ENCODE measurements at regions of chr3 and their contacts with region 1.

Region 1: GRCh38 chr3:194134757-194135528 is 1.0 kb upstream of the HES1 start:
- DNase-seq: peak; percentile 75 to 94 (median 80)
- ATAC-seq: peak; percentile 61
- H3K4me3 ChIP-seq: peak overlapping the region; percentile 56
- H3K27ac ChIP-seq: peak overlapping the region; percentile 85
- H3K4me1 ChIP-seq: peaks cover 26 to 49% of the 10 kb centered on the region in 2 experiments
- H3K27me3 ChIP-seq: no peaks in the 10 kb centered on the region
- CTCF ChIP-seq: no peak
- EP300 ChIP-seq: peak; percentile 67
- POLR2A ChIP-seq: peak; percentile 69
- RAD21 ChIP-seq: peak in 1 of 2 experiments; percentile 21; a peak in 2 of 4 replicates

Region 2: DNA sequence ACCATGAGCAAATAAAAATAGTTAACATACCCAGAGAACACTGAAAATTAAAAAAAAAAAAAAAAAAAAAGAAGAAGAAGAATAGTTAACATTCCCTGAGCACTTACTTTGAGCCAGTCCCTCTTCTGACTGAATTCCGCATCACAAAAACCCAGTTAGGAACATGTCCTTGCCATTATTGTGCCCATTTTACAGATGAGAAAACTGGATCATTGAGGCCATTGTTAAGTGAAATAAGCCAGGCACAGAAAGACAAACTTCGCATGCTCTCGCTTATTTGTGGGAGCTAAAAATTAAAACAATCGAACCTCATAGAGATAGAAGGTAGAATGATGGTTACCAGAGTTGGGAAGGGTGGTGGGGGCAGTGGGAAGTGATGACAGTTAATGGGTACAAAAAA is 1527.1 kb before region 1 on chr3:
- CTCF ChIA-PET with region 1: no interaction called
- POLR2A ChIA-PET with region 1: no interaction called
- in situ Hi-C with region 1: no loop called
- intact Hi-C with region 1: no loop called
- DNase-seq: no peak
- ATAC-seq: no peak
- H3K4me3 ChIP-seq: no peak overlapping the region
- H3K27ac ChIP-seq: no peak overlapping the region
- H3K4me1 ChIP-seq: no peaks in the 10 kb centered on the region
- H3K27me3 ChIP-seq: no peaks in the 10 kb centered on the region
- CTCF ChIP-seq: no peak
- EP300 ChIP-seq: no peak
- POLR2A ChIP-seq: no peak
- RAD21 ChIP-seq: no peak

Region 3: GRCh38 chr3:193780810-193781472 is 354.0 kb before region 1 on chr3:
- CTCF ChIA-PET with region 1: interaction called, 5 read pairs
- POLR2A ChIA-PET with region 1: interaction called, 17 read pairs
- in situ Hi-C with region 1: loop called (anchors 5 kb)
- intact Hi-C with region 1: loop called (anchors 2 kb)
- DNase-seq: peak; percentile 77 to 85 (median 78)
- ATAC-seq: peak; percentile 93
- H3K4me3 ChIP-seq: no peak overlapping the region
- H3K27ac ChIP-seq: no peak overlapping the region
- H3K4me1 ChIP-seq: peaks cover 10 to 22% of the 10 kb centered on the region in 2 experiments; a peak in 4 of 5 replicates
- H3K27me3 ChIP-seq: no peaks in the 10 kb centered on the region
- CTCF ChIP-seq: peak; percentile 86
- EP300 ChIP-seq: no peak
- POLR2A ChIP-seq: no peak
- RAD21 ChIP-seq: peak; percentile 93 to 96

Region 4: DNA sequence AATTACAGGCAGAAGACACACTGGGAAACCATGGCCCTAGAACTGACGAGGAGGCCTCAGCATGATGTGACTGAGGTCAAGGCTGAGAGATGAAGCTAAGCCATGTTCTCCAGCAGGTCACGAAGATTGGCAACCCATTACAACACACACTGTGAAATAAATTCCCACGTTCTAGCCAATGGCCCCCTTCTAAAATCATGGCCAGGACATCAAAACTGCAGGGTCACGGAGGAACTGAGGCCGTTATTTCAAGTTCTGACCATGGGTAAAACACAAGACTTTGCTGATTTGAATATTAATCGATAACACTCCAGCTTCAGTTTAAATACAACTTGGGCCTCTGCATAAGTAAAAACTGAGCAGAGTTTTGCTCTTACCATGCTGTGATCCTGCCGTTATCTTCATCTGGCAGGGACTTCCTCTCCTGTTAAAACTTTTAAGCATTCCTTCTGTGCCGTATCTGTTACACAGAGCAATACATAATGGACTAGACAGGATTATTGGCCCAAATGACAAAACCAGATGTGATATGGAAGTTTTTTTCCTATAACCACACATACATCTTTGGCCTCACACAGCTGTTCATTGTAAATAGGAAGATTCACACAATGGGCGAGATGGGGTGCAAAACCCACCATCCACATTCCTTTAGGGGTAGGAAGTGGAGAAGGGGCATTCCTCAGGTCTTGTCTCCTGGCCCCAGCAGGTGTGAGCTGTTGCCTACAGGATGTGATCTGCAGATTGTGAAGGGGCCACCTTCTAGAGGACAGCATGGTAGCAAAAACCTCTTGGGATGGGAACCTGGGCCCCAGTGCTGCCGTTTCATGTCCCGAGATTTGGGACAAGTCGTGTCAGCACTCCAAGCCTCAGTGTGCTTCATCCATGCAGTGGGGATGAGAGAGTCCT is 334.6 kb before region 1 on chr3:
- CTCF ChIA-PET with region 1: no interaction called
- POLR2A ChIA-PET with region 1: interaction called, 12 read pairs
- in situ Hi-C with region 1: no loop called
- intact Hi-C with region 1: no loop called
- DNase-seq: peak; percentile 24 to 68 (median 40)
- ATAC-seq: peak; percentile 81
- H3K4me3 ChIP-seq: no peak overlapping the region
- H3K27ac ChIP-seq: peak overlapping the region; percentile 57
- H3K4me1 ChIP-seq: peaks cover 6 to 24% of the 10 kb centered on the region in 2 experiments; a peak in 3 of 5 replicates
- H3K27me3 ChIP-seq: no peaks in the 10 kb centered on the region
- CTCF ChIP-seq: no peak
- EP300 ChIP-seq: peak; percentile 76
- POLR2A ChIP-seq: no peak
- RAD21 ChIP-seq: no peak

Region 5: GRCh38 chr3:193938613-193939012 is 196.3 kb before region 1 on chr3:
- CTCF ChIA-PET with region 1: no interaction called
- POLR2A ChIA-PET with region 1: interaction called, 10 read pairs
- in situ Hi-C with region 1: no loop called
- intact Hi-C with region 1: loop called (anchors 5 kb)
- DNase-seq: peak in 2 of 4 experiments; percentile 24 to 41
- ATAC-seq: peak; percentile 6; the same call in 1 of the 3 replicates
- H3K4me3 ChIP-seq: no peak overlapping the region
- H3K27ac ChIP-seq: peak overlapping the region; percentile 39; the same call in 2 of the 3 replicates
- H3K4me1 ChIP-seq: peaks cover 21 to 45% of the 10 kb centered on the region in 2 experiments
- H3K27me3 ChIP-seq: no peaks in the 10 kb centered on the region
- CTCF ChIP-seq: no peak
- EP300 ChIP-seq: no peak
- POLR2A ChIP-seq: no peak
- RAD21 ChIP-seq: no peak

Region 6: DNA sequence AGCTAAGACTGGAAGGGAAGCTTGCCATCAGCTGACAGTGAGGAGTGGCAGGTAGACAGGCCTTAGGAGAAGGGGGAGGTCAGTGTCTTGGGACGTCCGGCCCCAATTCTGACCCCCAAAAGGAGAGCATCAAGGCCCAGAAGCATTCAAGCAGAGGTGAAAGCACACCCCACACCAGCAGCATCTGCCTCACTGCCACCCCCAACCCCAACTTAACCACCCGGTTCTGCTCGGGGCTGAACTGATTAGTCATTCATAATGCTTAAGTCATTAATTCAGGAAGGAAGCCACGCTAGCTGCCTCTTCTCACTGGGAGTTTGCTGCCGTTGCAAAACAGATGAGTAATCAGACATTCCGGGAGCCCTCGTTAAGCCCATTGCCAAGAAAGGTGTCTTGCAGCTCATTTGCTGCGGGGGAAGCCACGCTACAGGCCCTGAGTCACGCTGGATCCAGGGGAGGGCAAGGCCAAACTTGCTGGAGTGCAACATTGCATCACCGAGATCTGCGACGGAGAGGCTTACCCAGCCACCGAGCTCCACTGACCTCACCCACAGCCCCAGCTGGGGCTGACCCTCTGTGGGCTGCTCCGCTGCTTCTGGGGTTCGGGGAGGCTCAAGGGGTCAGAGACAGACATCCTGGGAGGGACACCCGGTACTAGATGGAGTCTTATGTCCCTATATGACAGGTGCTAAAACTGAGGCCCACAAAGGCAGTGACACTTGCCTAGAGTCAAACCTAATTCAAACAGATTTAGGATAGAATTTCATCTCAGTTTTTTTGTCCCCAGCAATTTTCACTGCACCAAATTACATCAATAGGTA is 45.4 kb before region 1 on chr3:
- CTCF ChIA-PET with region 1: no interaction called
- POLR2A ChIA-PET with region 1: interaction called, 8 read pairs
- in situ Hi-C with region 1: no loop called
- intact Hi-C with region 1: loop called (anchors 1 kb)
- DNase-seq: peak; percentile 82 to 94 (median 88)
- ATAC-seq: peak; percentile 95
- H3K4me3 ChIP-seq: no peak overlapping the region
- H3K27ac ChIP-seq: peak overlapping the region; percentile 86
- H3K4me1 ChIP-seq: peaks cover 15 to 26% of the 10 kb centered on the region in 2 experiments
- H3K27me3 ChIP-seq: no peaks in the 10 kb centered on the region
- CTCF ChIP-seq: no peak
- EP300 ChIP-seq: peak; percentile 95
- POLR2A ChIP-seq: 0 out of 2 replicates have a peak, but pooled peaks have one; percentile 51
- RAD21 ChIP-seq: peak; percentile 21 to 40; a peak in 3 of 4 replicates

Region 7: DNA sequence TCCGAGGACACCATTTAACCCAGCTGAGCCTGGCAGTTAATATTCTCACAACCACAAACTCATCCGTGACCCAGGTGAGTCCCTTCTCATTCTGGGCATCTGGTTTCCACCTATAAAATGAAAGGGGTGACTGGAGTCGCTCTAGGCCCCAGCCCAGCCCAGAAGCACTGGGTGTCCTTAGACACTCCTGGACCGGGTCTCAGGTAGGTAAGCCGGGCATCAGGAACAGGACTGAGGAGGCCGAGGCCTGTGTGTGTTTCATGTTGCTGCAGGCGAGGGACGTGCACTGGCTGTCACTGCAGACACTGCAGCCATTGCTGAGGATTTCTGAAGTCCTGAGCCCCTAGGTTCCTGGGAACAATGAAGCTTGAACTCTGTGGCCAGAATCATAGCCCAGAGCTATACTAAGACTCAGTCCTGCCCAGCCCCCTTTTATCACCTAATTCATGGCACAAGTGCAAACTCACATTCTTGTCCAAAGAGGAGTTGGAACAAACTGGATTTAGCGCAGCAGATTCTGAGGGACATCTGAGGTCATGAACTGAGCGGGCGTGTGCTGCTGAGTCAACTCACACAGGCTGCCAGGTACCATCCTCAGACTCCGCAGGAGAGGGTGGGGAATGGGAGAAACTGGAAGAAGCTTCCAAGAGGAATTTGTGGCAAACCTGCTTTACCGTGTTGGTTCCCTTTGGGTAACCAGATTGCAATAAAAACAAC is 735.6 kb after region 1 on chr3:
- CTCF ChIA-PET with region 1: no interaction called
- POLR2A ChIA-PET with region 1: no interaction called
- in situ Hi-C with region 1: no loop called
- intact Hi-C with region 1: no loop called
- DNase-seq: no peak
- ATAC-seq: no peak
- H3K4me3 ChIP-seq: no peak overlapping the region
- H3K27ac ChIP-seq: no peak overlapping the region
- H3K4me1 ChIP-seq: no peaks in the 10 kb centered on the region
- H3K27me3 ChIP-seq: peaks cover 25 to 66% of the 10 kb centered on the region in 2 experiments
- CTCF ChIP-seq: no peak
- EP300 ChIP-seq: no peak
- POLR2A ChIP-seq: no peak
- RAD21 ChIP-seq: no peak